BJ (cell line): ENCODE measurements at regions of chr6 and their contacts with region 1.

Region 1: GRCh38 chr6:134123666-134124208 is 71.3 kb upstream of the SLC2A12 start:
- DNase-seq: peak; percentile 30
- H3K4me3 ChIP-seq: no peak overlapping the region
- H3K27me3 ChIP-seq: no peaks in the 10 kb centered on the region
- CTCF ChIP-seq: peak; percentile 63

Region 2: GRCh38 chr6:134047673-134048072 is 76.1 kb before region 1 on chr6:
- CTCF ChIA-PET with region 1: no interaction called
- POLR2A ChIA-PET with region 1: no interaction called
- DNase-seq: no peak
- H3K4me3 ChIP-seq: no peak overlapping the region
- H3K27me3 ChIP-seq: no peaks in the 10 kb centered on the region
- CTCF ChIP-seq: no peak

Region 3: DNA sequence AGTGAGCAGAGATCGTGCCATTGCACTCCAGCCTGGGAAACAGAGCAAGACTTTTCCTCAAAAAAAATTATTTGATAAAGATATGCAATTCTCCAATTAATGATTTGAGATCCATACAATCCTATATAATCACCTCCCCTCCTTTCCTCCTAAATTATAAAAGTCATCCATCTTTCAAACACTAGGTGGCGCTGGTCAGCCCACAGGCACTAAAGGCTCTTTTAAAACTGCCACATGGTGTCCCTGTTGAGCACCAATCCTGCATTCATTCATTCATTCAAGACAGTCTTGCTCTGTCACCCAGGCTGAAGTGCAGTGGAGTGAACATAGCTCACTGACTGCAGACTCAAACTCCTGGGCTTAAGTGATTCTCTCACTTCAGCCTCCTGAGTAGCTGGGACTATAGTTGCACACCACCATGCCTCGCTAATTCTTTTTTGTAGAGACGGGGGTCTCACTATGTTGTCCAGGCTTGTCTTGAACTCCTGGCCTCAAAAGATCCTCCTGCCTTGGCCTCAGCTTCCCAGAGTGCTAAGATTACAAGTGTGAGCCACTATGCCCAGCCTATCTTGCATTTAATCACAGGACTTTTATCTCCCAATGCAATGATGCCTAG is 12.6 kb before region 1 on chr6:
- CTCF ChIA-PET with region 1: interaction called, 58 read pairs
- POLR2A ChIA-PET with region 1: interaction called, 21 read pairs
- DNase-seq: no peak
- H3K4me3 ChIP-seq: no peak overlapping the region
- H3K27me3 ChIP-seq: peaks cover 2% of the 10 kb centered on the region; the same call in 1 of the 2 replicates
- CTCF ChIP-seq: peak; percentile 80

Region 4: GRCh38 chr6:134145786-134146185 is 22.0 kb after region 1 on chr6:
- CTCF ChIA-PET with region 1: interaction called, 17 read pairs
- POLR2A ChIA-PET with region 1: no interaction called
- DNase-seq: peak; percentile 51
- H3K4me3 ChIP-seq: no peak overlapping the region
- H3K27me3 ChIP-seq: no peaks in the 10 kb centered on the region
- CTCF ChIP-seq: no peak

Region 5: DNA sequence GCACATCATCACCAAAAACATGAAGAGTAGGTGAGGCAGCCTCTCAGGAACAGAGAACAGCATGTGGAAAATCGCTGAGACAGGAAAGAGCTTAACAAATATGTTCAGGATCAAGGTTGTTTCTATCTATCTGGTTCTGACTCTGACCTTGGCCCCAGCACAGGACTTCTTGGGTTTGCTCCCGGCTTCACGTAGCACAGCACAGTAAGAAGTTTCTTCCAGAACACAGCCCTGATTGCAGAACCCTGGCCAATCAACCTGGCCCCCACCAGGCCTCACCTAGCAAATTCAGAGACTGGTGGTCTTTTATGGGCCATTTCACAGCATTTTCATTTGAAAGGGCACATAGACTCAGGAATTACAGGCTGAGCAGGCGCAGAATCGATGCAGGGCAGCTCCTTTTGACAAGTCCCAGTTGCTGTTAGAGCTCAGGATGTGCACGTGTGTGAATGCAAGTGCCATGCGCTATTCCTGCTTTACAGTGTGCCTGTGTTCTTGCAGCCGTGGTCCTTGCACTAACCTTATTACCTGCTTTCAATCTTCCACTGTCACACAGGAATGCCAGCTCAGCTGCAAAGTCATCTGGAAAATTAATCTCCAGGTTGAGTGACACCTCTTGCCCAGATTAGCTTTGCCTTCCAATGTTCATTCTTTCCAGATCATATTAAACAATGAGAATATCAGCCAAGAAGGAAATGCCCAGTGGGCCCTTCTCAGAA is 29.2 kb after region 1 on chr6:
- CTCF ChIA-PET with region 1: interaction called, 20 read pairs
- POLR2A ChIA-PET with region 1: no interaction called
- DNase-seq: no peak
- H3K4me3 ChIP-seq: no peak overlapping the region
- H3K27me3 ChIP-seq: no peaks in the 10 kb centered on the region
- CTCF ChIP-seq: no peak

Region 6: GRCh38 chr6:134161036-134161435 is 37.3 kb after region 1 on chr6:
- CTCF ChIA-PET with region 1: interaction called, 20 read pairs
- POLR2A ChIA-PET with region 1: no interaction called
- DNase-seq: peak; percentile 46
- H3K4me3 ChIP-seq: no peak overlapping the region
- H3K27me3 ChIP-seq: no peaks in the 10 kb centered on the region
- CTCF ChIP-seq: no peak

Region 7: GRCh38 chr6:134882426-134883038 is 758.8 kb after region 1 on chr6:
- CTCF ChIA-PET with region 1: interaction called, 26 read pairs
- POLR2A ChIA-PET with region 1: no interaction called
- DNase-seq: no peak
- H3K4me3 ChIP-seq: no peak overlapping the region
- H3K27me3 ChIP-seq: no peaks in the 10 kb centered on the region
- CTCF ChIP-seq: peak; percentile 83

Region 8: GRCh38 chr6:134938896-134939295 is 815.2 kb after region 1 on chr6:
- CTCF ChIA-PET with region 1: interaction called, 61 read pairs
- POLR2A ChIA-PET with region 1: no interaction called
- DNase-seq: no peak
- H3K4me3 ChIP-seq: no peak overlapping the region
- H3K27me3 ChIP-seq: no peaks in the 10 kb centered on the region
- CTCF ChIP-seq: no peak